Activated naive CD4-positive, alpha-beta T cell treated with anti-CD3 and anti-CD28 coated beads, Interleukin-2, amount 10 ng/mL, durations not matched to agents 7 days and 5 days (primary cell): ENCODE measurements at regions of chr6 and their contacts with region 1.

Region 1: GRCh38 chr6:106512048-106512967 is 117.0 kb downstream of the RTN4IP1 start:
- DNase-seq: peak; percentile 91
- H3K4me3 Mint-ChIP-seq: peak overlapping the region; percentile 95
- H3K27ac Mint-ChIP-seq: peak overlapping the region; percentile 95
- H3K4me1 Mint-ChIP-seq: peaks cover 60% of the 10 kb centered on the region
- H3K27me3 Mint-ChIP-seq: peaks cover 32% of the 10 kb centered on the region

Region 2: GRCh38 chr6:106525111-106525881 is 13.0 kb after region 1 on chr6:
- CTCF ChIA-PET with region 1: interaction called, 40 read pairs
- DNase-seq: no peak
- H3K4me3 Mint-ChIP-seq: peak overlapping the region; percentile 74
- H3K27ac Mint-ChIP-seq: peak overlapping the region; percentile 98
- H3K4me1 Mint-ChIP-seq: peaks cover 71% of the 10 kb centered on the region
- H3K27me3 Mint-ChIP-seq: no peaks in the 10 kb centered on the region

Region 3: DNA sequence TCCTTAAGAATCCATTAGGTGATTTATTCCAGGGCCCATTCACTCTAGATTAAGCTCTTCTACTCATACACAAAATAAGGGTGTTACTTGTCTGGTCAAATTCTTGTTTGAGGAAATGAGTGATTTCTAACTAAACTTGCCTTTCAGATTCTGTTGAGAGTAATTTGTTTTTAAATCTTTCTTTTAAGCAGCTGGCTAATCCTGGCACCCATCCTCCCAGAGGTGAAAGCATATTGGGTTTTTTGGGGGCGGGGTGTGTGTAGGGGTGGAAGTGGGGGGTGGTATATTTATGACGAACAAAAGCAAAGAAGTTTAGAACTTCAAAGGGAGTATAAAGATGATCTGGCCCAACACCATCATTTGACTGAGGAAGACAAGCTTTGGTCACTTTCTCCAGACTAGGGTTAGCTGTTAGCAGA is 22.3 kb after region 1 on chr6:
- CTCF ChIA-PET with region 1: interaction called, 11 read pairs
- DNase-seq: peak; percentile 30
- H3K4me3 Mint-ChIP-seq: no peak overlapping the region
- H3K27ac Mint-ChIP-seq: peak overlapping the region; percentile 43
- H3K4me1 Mint-ChIP-seq: peaks cover 62% of the 10 kb centered on the region
- H3K27me3 Mint-ChIP-seq: no peaks in the 10 kb centered on the region

Region 4: DNA sequence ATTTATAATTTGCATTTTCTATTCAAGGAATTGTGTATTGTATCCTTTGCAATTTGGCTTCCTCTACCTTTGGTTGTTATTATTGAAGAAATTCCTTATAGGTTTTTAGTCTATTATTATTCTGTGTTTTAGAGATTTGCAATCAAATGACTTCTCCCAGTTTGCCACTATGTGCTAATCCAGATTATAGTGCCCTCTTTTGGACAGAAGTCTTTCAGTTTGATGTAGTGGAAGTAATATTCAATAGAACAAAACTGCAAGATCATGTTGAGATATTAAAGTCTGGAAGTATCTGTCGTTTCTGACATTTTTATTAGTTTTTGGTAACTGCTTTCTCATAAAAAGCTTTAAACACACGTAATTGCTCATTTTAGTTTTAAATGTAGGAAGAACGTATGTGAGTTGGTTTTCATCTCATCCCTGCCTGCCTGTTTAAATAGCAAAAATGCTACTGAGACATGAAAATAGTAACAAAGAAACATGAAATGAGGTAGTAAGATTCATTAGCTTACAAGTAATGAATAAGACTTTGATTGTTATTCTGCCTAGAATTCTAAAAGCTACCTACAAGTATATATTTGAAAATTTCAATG is 44.2 kb after region 1 on chr6:
- CTCF ChIA-PET with region 1: interaction called, 66 read pairs
- DNase-seq: no peak
- H3K4me3 Mint-ChIP-seq: no peak overlapping the region
- H3K27ac Mint-ChIP-seq: no peak overlapping the region
- H3K4me1 Mint-ChIP-seq: peaks cover 4% of the 10 kb centered on the region
- H3K27me3 Mint-ChIP-seq: no peaks in the 10 kb centered on the region